Activated CD4-positive, alpha-beta T cell treated with anti-CD3 and anti-CD28 coated beads, Interleukin-2, amount 10 ng/mL, durations not matched to agents 24 days and 14 days (primary cell): ENCODE measurements at regions of chr16 and their contacts with region 1.

Region 1: DNA sequence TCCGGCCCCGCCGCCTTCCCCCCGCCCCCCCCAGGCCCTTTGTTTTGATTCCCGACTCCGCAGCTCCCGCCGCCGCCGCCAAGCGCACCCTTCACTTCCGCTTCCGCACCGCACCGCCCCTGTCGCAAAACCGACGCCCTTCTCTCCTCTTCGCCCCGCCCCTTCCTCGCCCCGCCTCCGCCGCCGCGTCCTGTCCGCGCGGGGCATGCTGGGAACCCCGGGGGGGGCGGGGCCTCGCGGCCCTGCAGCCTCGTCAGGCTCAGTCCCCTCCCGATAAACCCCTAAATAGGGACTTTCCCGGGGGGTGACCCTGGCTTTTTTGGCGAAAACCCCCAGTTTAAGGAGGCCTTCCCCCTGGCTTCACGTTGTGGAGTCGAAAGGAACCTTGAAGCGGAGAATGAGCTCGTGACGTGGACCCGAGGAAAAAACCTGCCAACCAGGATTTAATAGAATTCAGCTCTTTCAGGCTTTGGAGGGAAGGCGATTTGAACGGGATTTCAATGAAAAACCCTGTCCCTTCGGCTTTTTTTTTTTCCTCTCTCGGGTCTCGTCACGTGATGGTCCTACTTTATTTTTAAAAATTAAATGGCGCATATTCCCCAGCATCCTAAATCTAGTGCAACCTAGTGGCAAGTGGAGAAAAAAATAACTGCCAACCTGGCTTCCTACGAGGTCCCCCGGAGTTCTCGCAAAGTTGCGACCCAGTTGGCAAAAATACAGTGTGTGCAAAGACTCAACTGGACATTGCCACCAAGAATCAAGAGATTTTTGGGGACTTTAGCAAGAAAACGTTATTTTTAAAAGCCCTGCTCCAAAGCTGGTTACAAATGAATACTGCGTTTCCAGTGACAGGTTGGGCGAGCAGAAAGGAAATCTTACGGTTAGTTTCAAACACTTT is at the start of gene MARF1:
- DNase-seq: peak; percentile 100
- H3K4me3 Mint-ChIP-seq: peak within 1 kb of the TSS; percentile 94
- H3K27ac Mint-ChIP-seq: peak within 1 kb of the TSS; percentile 97
- H3K4me1 Mint-ChIP-seq: peaks cover 42% of the 10 kb centered on the region
- H3K27me3 Mint-ChIP-seq: no peaks in the 10 kb centered on the region
- total RNA-seq, gene MARF1: 55.6 and 56.2 TPM in 2 replicates

Region 2: DNA sequence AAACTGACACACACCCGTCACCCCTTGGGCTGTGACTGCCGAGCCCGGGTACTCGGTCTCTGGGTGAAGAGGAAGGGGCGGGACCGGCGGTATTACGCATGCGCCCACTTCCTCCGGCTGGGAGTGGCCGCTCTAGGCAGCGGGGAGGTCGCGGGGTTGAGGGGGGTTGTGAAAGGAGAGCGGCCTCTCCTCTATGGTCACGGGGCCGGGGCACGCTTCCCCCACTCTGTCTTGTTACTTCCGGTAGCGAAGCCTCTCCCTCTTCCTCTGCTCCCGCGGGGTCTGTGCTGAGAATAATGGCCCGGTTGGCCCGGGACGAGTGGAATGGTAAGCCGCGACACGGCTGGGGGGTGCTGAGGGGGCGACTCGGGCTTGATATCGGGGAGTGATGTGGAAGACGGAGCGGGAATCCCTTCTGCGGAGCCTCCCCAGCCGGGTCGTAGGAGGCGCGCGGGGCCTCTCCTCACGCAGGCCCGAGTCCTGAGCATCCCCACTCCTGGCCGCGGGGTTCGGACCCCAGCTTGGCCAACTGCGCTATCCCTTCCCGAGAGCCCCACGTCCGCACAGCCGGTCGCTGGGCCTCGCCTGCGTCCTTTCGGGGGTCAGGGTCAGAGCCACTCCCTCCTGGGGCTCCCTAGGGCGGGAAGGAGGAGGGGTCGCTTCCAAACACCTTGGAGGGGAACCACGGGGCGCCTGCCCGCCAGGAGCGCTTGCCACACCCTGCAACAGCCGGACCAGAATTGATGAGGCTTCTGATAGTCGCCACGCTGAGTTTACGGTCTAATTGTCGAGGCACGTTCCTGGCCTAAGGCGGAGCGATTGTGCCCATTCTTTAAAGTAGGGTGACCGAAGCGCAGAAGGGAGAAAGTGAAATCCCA is 1010.4 kb before region 1 on chr16 and contains the start of gene BFAR:
- intact Hi-C with region 1: loop called (anchors 5 kb)
- DNase-seq: peak; percentile 100
- H3K4me3 Mint-ChIP-seq: peak within 1 kb of the TSS; percentile 100
- H3K27ac Mint-ChIP-seq: peak within 1 kb of the TSS; percentile 100
- H3K4me1 Mint-ChIP-seq: peaks cover 46% of the 10 kb centered on the region
- H3K27me3 Mint-ChIP-seq: no peaks in the 10 kb centered on the region
- total RNA-seq, gene BFAR: 59.3 and 63.4 TPM in 2 replicates

Region 3: DNA sequence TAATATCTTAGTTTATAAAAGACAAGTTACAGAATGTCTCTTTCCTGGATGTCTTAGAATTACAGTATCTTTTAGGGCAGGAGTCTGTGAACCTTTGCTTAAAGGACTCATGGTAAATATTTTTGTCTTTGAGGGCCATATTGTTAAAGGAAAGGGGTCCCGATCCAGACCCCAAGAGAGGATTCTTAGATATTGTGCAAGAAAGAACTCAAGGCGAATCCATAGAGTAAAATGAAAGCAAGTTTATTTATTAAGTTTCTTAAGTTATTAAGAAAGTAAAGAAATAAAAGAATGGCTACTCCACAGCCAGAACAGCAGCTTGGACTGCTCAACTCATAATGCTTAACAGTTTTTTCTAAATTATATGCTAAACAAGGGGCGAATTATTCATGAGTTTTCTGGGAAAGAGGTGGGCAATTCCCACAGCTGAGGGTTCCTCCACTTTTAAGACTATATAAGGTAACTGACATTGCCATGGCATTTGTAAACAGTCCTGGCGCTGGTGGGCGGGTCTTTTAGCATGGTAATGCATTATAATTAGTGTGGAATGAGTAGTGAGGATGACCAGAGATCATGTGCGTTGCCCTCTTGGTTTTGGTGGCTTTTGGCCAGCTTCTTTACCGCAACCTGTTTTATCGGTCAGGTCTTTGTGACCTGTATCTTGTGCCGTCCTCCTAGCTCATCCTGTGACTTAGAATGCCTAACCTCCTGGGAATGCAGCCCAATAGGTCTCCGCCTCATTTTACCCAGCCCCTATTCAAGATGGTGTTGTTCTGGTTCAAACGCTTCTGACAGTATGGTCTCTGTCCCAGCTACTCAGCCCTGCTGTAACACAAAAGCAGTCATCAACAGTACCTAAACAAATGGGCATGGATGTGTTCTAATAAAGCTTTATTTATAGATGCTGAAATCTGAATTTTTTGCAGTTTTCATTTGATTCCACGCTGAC is 155.7 kb before region 1 on chr16:
- intact Hi-C with region 1: loop called (anchors 2 kb)
- DNase-seq: no peak
- H3K4me3 Mint-ChIP-seq: no peak overlapping the region
- H3K27ac Mint-ChIP-seq: no peak overlapping the region
- H3K4me1 Mint-ChIP-seq: peaks cover 40% of the 10 kb centered on the region
- H3K27me3 Mint-ChIP-seq: no peaks in the 10 kb centered on the region

Region 4: GRCh38 chr16:15682105-15682570 is 38.8 kb after region 1 on chr16:
- intact Hi-C with region 1: loop called (anchors 5 kb)
- DNase-seq: peak; percentile 78
- H3K4me3 Mint-ChIP-seq: no peak overlapping the region
- H3K27ac Mint-ChIP-seq: no peak overlapping the region
- H3K4me1 Mint-ChIP-seq: peaks cover 12% of the 10 kb centered on the region
- H3K27me3 Mint-ChIP-seq: no peaks in the 10 kb centered on the region